Activated CD4-positive, alpha-beta T cell treated with anti-CD3 and anti-CD28 coated beads for 36 hours (primary cell): ENCODE measurements at regions of chr1 and their contacts with region 1.

Region 1: DNA sequence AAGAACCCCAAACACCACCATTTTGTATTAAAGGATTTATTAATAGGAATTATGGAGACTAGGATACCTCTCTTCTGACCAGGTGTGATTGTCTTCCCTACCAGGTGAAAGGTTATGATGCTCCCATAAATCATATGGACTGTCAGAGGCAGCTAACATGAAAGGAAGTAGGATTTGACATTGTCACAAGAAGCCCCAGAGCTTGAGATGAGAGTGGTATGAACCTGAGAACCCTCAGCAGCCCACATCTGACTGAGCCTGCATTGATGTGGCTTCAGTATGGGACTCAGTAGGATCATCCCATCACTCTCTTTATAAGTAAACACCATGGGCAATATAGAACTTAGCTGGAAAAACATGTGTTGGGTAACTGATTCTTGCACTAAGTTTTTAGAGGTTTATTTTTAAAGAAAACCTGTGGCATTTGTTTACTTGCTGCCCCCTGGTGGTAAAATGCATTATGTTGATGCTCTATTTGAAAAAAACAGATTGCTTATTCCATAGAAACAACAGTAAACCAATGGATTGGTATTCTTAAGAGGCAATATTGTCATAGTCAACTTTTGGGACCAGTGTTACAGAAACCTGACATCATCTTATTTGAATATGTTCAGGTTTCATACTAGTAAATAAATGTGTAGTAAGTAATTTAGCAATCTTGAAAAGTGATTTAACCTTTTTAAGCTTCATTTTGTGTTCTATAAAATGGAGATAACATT is 16.6 kb upstream of the CACYBP start:
- DNase-seq: peak; percentile 44
- ATAC-seq: peak; percentile 39
- H3K4me3 Mint-ChIP-seq: no peak overlapping the region
- H3K27ac Mint-ChIP-seq: no peak overlapping the region
- H3K4me1 Mint-ChIP-seq: peaks cover 19% of the 10 kb centered on the region
- H3K27me3 Mint-ChIP-seq: no peaks in the 10 kb centered on the region

Region 2: DNA sequence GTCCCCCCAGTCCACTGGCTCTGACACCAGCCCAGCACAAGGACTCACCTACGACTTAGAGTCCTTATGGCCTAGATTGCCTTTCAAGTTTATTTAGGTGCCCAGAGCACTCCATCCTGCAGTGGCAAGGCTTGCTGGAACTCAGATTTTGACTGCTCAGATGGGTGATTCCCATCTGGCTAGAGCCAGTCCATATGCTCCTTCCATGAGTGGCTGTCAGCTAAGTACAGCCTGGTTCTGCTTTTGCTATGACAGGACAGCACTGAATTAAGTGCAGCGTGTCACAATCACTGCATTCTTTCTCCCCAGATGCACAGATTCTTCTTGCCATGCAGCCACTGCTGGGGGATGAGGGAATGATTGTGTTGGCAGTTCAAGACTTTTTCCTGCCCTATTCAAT is 491.5 kb before region 1 on chr1:
- CTCF ChIA-PET with region 1: no interaction called
- POLR2A ChIA-PET with region 1: no interaction called
- intact Hi-C with region 1: no loop called
- DNase-seq: no peak
- ATAC-seq: no peak
- H3K4me3 Mint-ChIP-seq: no peak overlapping the region
- H3K27ac Mint-ChIP-seq: no peak overlapping the region
- H3K4me1 Mint-ChIP-seq: peaks cover 1% of the 10 kb centered on the region
- H3K27me3 Mint-ChIP-seq: no peaks in the 10 kb centered on the region

Region 3: GRCh38 chr1:174769961-174770549 is 213.1 kb before region 1 on chr1:
- CTCF ChIA-PET with region 1: interaction called, 10 read pairs
- POLR2A ChIA-PET with region 1: no interaction called
- intact Hi-C with region 1: loop called (anchors 1 kb)
- DNase-seq: no peak
- ATAC-seq: no peak
- H3K4me3 Mint-ChIP-seq: no peak overlapping the region
- H3K27ac Mint-ChIP-seq: no peak overlapping the region
- H3K4me1 Mint-ChIP-seq: peaks cover 10% of the 10 kb centered on the region
- H3K27me3 Mint-ChIP-seq: no peaks in the 10 kb centered on the region

Region 4: GRCh38 chr1:174883409-174883808 is 99.7 kb before region 1 on chr1:
- CTCF ChIA-PET with region 1: interaction called, 4 read pairs
- POLR2A ChIA-PET with region 1: no interaction called
- intact Hi-C with region 1: loop called in 1 of 2 experiments (anchors 5 kb)
- DNase-seq: no peak
- ATAC-seq: no peak
- H3K4me3 Mint-ChIP-seq: no peak overlapping the region
- H3K27ac Mint-ChIP-seq: no peak overlapping the region
- H3K4me1 Mint-ChIP-seq: peaks cover 2% of the 10 kb centered on the region
- H3K27me3 Mint-ChIP-seq: no peaks in the 10 kb centered on the region

Region 5: DNA sequence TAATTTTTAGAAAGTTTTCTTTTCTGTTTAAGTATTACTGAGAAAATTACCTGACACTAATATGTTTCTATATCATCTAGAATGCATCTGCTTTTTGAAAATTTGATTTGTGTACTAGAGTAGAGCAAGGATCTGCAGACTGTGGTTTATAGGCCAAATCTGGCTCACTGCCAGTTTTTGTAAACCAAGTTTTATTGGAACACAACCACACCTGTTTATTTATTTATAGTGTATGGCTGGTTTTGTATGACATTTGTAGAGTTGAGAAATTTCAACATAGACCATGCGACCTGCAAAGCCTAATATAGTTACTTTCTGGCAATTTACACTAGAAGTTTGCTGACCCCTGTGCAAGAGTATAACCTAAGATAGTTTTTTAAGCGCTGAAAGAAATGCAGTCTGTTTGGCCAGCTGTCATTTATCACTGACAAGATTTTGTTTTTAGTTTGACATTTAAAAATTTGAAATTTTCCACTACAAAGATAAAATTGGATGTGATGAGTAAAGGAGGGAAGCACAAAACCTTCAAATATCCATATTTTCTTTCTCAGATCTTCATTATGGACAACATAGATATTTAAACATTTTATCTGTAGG is 19.5 kb before region 1 on chr1:
- CTCF ChIA-PET with region 1: interaction called, 8 read pairs
- POLR2A ChIA-PET with region 1: interaction called, 3 read pairs
- intact Hi-C with region 1: loop called (anchors 1 to 2 kb)
- DNase-seq: no peak
- ATAC-seq: no peak
- H3K4me3 Mint-ChIP-seq: no peak overlapping the region
- H3K27ac Mint-ChIP-seq: peak overlapping the region; percentile 92
- H3K4me1 Mint-ChIP-seq: peaks cover 47% of the 10 kb centered on the region
- H3K27me3 Mint-ChIP-seq: no peaks in the 10 kb centered on the region

Region 6: GRCh38 chr1:175095978-175096607 is 113.0 kb after region 1 on chr1:
- CTCF ChIA-PET with region 1: no interaction called
- POLR2A ChIA-PET with region 1: no interaction called
- intact Hi-C with region 1: no loop called
- DNase-seq: no peak
- ATAC-seq: no peak
- H3K4me3 Mint-ChIP-seq: no peak overlapping the region
- H3K27ac Mint-ChIP-seq: no peak overlapping the region
- H3K4me1 Mint-ChIP-seq: no peaks in the 10 kb centered on the region
- H3K27me3 Mint-ChIP-seq: no peaks in the 10 kb centered on the region

Region 7: DNA sequence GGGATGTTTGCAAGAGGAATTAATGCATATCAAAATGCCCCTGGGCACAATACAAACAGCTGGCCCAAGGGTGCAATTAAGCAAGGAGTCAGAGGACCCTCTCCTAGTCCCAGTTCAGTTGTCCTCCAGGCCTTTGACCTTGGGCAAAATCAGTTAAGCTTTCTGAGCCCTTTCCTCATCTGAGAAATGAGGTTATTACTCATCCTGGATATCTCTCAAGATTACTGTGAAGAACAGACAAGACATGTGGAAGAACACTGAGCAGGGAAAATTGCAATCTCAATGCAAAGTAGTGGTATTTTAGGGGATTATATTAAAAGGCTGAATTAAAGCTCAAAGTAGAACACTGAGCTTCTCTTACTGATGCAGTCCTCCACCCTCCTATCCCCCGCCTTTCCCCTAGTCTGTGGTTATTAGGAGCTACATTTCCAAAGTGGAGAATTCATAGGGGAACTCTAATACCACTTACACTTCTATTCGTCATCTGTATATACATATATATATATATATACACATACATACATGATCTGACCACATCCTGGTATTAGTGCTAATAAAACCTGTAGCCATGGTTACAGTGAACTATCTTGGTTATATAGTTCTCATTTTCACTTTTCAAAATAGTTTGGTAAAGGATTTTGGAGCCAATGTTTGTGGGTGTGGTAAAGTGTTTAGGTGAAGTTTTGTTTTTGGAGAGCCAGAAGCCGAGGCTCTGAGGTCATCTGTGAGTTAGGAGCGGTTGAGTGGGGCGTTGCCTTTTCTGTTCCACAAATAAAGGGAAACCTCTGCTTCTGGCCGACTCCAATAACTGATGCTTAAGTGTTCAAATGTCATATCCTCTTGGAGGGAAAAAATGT is 191.4 kb after region 1 on chr1:
- CTCF ChIA-PET with region 1: no interaction called
- POLR2A ChIA-PET with region 1: no interaction called
- intact Hi-C with region 1: no loop called
- DNase-seq: no peak
- ATAC-seq: no peak
- H3K4me3 Mint-ChIP-seq: no peak overlapping the region
- H3K27ac Mint-ChIP-seq: no peak overlapping the region
- H3K4me1 Mint-ChIP-seq: peaks cover 48% of the 10 kb centered on the region
- H3K27me3 Mint-ChIP-seq: no peaks in the 10 kb centered on the region